ENCODE measurements at regions of chr6 and their contacts with region 1.

Region 1: DNA sequence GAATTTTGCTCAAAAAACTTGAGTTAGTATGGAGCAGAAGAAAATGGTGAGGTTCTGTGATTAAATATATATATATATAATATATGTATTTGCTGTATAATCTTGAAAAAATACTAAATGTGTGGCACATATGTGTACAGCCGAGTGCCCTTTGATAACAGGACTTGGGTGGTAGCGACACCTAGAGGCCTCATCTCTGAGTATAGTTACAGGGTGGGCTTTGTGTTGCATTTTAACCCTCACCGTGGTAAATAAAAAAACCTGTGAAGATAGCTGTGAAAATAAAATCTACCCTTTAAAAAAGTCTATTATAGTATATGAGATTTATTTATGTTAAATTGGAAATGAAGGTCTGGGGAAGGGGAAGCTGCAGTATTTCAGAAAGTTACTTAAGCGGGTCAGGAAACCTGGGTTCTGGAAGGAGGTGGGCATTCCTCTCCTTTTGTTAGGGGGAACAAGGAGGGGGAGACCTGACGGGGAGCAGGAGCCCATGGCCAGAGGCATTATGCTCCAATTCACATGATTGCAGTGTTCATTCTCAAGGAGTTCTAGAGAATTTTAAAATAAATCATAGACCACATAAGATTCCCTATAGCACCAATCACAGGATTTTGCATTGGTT is 82.7 kb downstream of the SH3BGRL2 start:
- DNase-seq: peak; percentile 50 to 73 (median 65)
- ATAC-seq: peak; percentile 74
- H3K4me3 ChIP-seq: no peak overlapping the region
- H3K27ac ChIP-seq: no peak overlapping the region
- H3K4me1 ChIP-seq: peaks cover 8% of the 10 kb centered on the region
- H3K27me3 ChIP-seq: no peaks in the 10 kb centered on the region
- CTCF ChIP-seq: peak; percentile 49 to 73 (median 69)
- POLR2A ChIP-seq: no peak

Region 2: GRCh38 chr6:79586548-79586947 is 127.3 kb before region 1 on chr6:
- intact Hi-C with region 1: loop called (anchors 10 kb)
- DNase-seq: no peak
- ATAC-seq: peak; percentile 67
- H3K4me3 ChIP-seq: no peak overlapping the region
- H3K27ac ChIP-seq: no peak overlapping the region
- H3K4me1 ChIP-seq: no peaks in the 10 kb centered on the region
- H3K27me3 ChIP-seq: no peaks in the 10 kb centered on the region
- CTCF ChIP-seq: peak in 5 of 7 experiments; percentile 24 to 48 (median 41)
- POLR2A ChIP-seq: no peak